ENCODE measurements at regions of chr6 and their contacts with region 1.

Region 1: GRCh38 chr6:47413752-47414422 is 63.7 kb upstream of the CD2AP start:
- DNase-seq: peak; percentile 47 to 63
- H3K4me3 ChIP-seq: peak overlapping the region; percentile 44
- H3K4me3 Mint-ChIP-seq: peak overlapping the region; percentile 59
- H3K27ac Mint-ChIP-seq: peak overlapping the region; percentile 9
- H3K4me1 ChIP-seq: peaks cover 25% of the 10 kb centered on the region
- H3K4me1 Mint-ChIP-seq: peaks cover 19% of the 10 kb centered on the region
- H3K27me3 ChIP-seq: no peaks in the 10 kb centered on the region
- H3K27me3 Mint-ChIP-seq: no peaks in the 10 kb centered on the region
- CTCF ChIP-seq: peak; percentile 79 to 82

Region 2: GRCh38 chr6:47455534-47456209 is 41.8 kb after region 1 on chr6:
- CTCF ChIA-PET with region 1: no interaction called
- POLR2A ChIA-PET with region 1: no interaction called
- intact Hi-C with region 1: loop called (anchors 1 kb)
- DNase-seq: no peak
- H3K4me3 ChIP-seq: no peak overlapping the region
- H3K4me3 Mint-ChIP-seq: no peak overlapping the region
- H3K27ac Mint-ChIP-seq: no peak overlapping the region
- H3K4me1 ChIP-seq: peaks cover 19% of the 10 kb centered on the region
- H3K4me1 Mint-ChIP-seq: peaks cover 13% of the 10 kb centered on the region
- H3K27me3 ChIP-seq: no peaks in the 10 kb centered on the region
- H3K27me3 Mint-ChIP-seq: no peaks in the 10 kb centered on the region
- CTCF ChIP-seq: no peak

Region 3: DNA sequence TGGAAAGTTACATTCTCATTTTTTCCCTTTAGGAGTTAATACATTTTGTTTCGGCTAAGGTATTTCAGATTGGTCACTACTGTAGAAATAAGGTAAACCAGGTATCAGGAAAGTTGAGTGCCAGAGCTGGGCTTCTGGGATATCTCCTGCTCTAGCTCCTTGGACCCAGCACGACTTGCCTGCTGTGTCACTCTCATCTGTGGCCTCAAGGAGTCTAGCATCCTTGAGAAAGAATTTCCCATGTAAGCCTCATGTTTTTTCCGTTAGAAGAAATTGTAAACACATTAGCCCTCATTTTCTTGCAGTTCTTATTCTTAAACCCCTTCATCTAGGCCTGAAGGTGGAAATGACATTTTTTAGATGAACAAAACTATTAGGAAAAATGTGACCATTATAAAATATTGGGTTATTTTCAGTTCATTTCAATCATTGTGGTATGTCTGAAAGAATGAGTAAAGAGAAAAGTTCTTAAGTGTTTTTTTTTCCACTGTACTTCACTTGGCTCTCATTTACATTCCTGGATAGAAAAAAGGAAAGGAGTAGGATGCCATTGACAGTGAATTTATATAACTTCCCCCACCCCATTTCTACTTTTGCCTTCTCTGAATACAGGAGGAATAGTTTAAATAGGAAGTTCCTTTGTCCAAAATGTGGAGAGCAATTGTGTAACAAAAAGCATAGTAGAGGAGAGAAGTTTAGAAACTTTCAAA is 110.4 kb after region 1 on chr6:
- CTCF ChIA-PET with region 1: no interaction called
- POLR2A ChIA-PET with region 1: no interaction called
- intact Hi-C with region 1: loop called (anchors 5 kb)
- DNase-seq: no peak
- H3K4me3 ChIP-seq: no peak overlapping the region
- H3K4me3 Mint-ChIP-seq: no peak overlapping the region
- H3K27ac Mint-ChIP-seq: no peak overlapping the region
- H3K4me1 ChIP-seq: peaks cover 11% of the 10 kb centered on the region; the same call in 1 of the 2 replicates
- H3K4me1 Mint-ChIP-seq: peaks cover 29% of the 10 kb centered on the region
- H3K27me3 ChIP-seq: no peaks in the 10 kb centered on the region
- H3K27me3 Mint-ChIP-seq: no peaks in the 10 kb centered on the region
- CTCF ChIP-seq: no peak

Region 4: GRCh38 chr6:47631269-47631772 is 217.4 kb after region 1 on chr6:
- CTCF ChIA-PET with region 1: interaction called, 4 read pairs
- POLR2A ChIA-PET with region 1: no interaction called
- intact Hi-C with region 1: loop called (anchors 1 kb)
- DNase-seq: peak in 1 of 2 experiments; percentile 53
- H3K4me3 ChIP-seq: no peak overlapping the region
- H3K4me3 Mint-ChIP-seq: no peak overlapping the region
- H3K27ac Mint-ChIP-seq: peak overlapping the region; percentile 84
- H3K4me1 ChIP-seq: peaks cover 42% of the 10 kb centered on the region
- H3K4me1 Mint-ChIP-seq: peaks cover 27% of the 10 kb centered on the region
- H3K27me3 ChIP-seq: no peaks in the 10 kb centered on the region
- H3K27me3 Mint-ChIP-seq: no peaks in the 10 kb centered on the region
- CTCF ChIP-seq: peak; percentile 46 to 68

Region 5: DNA sequence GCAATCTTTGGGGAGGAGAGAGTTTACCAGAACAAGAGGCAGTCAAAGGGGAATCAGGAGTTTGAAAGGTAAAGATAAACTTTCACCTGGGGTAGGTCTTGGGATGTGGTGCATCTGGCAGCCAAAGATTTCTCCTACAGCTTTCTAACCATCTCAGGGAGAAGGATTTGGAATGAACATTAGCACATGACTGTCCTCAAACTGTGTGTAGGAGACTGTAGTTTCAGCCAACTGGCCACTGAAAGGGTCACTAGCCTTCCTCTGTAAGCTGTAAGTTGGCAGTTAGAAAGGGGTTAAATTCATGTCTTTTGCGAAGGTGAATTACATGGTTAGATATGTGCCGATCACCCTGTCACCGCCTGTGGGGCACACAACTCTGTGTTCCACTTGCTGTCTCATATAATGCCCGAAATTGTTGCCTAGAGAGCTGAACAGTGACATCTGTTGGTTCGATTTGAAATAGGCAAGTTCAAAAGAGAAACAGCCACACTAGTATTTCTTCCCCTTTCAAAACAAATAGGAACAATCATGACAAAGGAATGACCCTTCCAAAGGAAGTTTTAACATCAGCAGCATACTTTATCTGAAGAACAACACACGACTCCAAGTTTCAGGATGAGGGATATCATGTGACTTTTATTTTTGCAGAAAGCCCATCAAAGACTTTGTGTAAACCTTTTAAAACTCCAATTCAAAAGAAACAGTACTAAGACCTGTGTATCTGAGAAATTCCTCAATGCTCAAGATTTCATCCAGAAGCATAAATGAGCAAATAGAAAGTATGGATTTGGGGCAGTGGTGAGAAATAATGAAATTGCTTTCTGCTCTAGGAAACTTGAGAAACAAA is 366.8 kb after region 1 on chr6:
- CTCF ChIA-PET with region 1: no interaction called
- POLR2A ChIA-PET with region 1: no interaction called
- intact Hi-C with region 1: loop called (anchors 1 kb)
- DNase-seq: peak in 1 of 2 experiments; percentile 55
- H3K4me3 ChIP-seq: no peak overlapping the region
- H3K4me3 Mint-ChIP-seq: peak overlapping the region; percentile 31
- H3K27ac Mint-ChIP-seq: no peak overlapping the region
- H3K4me1 ChIP-seq: no peaks in the 10 kb centered on the region
- H3K4me1 Mint-ChIP-seq: no peaks in the 10 kb centered on the region
- H3K27me3 ChIP-seq: no peaks in the 10 kb centered on the region; the same call in 1 of the 2 replicates
- H3K27me3 Mint-ChIP-seq: peaks cover 3% of the 10 kb centered on the region
- CTCF ChIP-seq: peak; percentile 34 to 64

Measured in Caco-2 (cell line).